ENCODE measurements at regions of chrX and their contacts with region 1.

Region 1: GRCh38 chrX:68822641-68823410 is 6.0 kb upstream of the EFNB1 start:
- DNase-seq: no peak
- H3K4me3 ChIP-seq: no peak overlapping the region
- H3K27ac ChIP-seq: no peak overlapping the region
- H3K4me1 ChIP-seq: peaks cover 0 to 4% (median 2%) of the 10 kb centered on the region in 4 donors
- H3K27me3 ChIP-seq: no peaks in the 10 kb centered on the region
- CTCF ChIP-seq: peak in 3 of 4 experiments; percentile 20 to 64 (median 27)
- EP300 ChIP-seq: no peak
- POLR2A ChIP-seq: no peak

Region 2: DNA sequence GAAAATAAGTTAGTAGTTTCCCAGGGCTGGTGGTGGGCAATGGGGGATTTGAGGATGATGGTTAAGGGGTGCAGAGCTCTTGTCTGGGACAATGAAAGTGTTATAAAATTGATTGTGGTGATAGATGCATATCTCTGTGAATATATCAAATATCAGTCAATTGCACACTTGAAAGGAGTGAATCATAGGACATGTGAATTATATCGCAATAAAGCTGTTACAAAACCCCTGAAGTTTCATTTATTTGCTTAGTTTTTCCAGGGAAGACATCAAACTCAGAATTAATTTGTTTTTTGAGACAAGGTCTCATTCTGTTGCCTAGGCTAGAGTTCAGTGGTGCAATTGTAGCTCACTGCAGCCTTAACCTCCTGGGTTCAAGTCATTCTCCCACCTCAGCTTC is 341.9 kb before region 1 on chrX:
- intact Hi-C with region 1: no loop called
- DNase-seq: no peak
- H3K4me3 ChIP-seq: no peak overlapping the region
- H3K27ac ChIP-seq: no peak overlapping the region
- H3K4me1 ChIP-seq: no peaks in the 10 kb centered on the region
- H3K27me3 ChIP-seq: no peaks in the 10 kb centered on the region
- CTCF ChIP-seq: no peak
- EP300 ChIP-seq: no peak
- POLR2A ChIP-seq: no peak

Region 3: DNA sequence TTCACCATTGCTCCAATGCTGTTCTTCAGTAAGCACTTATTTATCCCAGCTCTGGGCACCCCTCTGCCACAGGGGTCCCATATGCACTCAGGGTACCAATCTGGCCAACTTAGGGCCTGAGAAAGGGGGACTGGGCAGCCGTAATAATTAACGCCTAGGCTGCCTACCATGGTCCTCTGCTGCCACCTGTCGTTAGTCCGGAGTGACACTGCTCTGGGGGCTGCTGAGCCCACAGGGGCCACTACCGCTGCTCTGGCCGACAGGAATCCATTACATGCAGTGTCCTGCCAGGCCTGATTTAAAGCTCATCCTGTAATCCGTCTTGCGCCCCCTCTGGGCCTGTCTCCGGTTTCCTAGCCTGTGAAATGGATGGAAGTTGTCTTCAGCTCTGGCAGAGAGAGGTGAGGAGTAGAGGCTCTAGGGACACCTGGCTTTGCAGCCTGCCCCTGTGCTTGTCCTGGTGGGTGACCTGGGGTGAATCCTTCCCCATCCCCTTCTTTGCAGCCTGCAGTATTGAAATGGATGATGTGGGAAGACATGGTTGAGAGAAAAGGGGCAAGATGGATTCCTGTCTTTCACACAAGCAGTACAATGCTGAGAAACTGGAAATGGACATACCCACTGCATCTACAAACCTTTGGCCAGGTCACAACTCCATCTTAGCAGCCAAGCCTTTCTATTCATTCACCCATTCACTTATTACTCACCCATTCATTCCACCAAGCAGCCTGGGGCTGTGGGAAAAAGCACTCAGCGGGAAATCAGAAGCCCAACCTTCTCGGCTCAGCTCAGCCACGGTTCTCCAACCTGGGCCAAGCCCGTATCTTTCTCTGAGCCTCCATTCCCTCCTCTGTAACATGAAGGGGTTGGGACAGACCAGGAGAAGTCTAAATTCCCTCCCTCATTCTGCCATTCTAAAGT is 565.0 kb after region 1 on chrX:
- intact Hi-C with region 1: loop called (anchors 5 kb)
- DNase-seq: no peak
- H3K4me3 ChIP-seq: no peak overlapping the region
- H3K27ac ChIP-seq: no peak overlapping the region
- H3K4me1 ChIP-seq: no peaks in the 10 kb centered on the region
- H3K27me3 ChIP-seq: peaks cover 0 to 3% (median 0%) of the 10 kb centered on the region in 3 donors
- CTCF ChIP-seq: peak; percentile 32 to 57 (median 52)
- EP300 ChIP-seq: no peak
- POLR2A ChIP-seq: no peak

Measured in sigmoid colon (tissue), 7 donors.